ENCODE measurements at regions of chr4 and their contacts with region 1.

Region 1: GRCh38 chr4:121950212-121950679 is 1.6 kb downstream of the TRPC3 start:
- DNase-seq: peak; percentile 13 to 30
- ATAC-seq: peak; percentile 31 to 34
- H3K4me3 ChIP-seq: peak overlapping the region; percentile 53 to 58 (median 54)
- H3K27ac ChIP-seq: no peak overlapping the region
- H3K4me1 ChIP-seq: peaks cover 0 to 8% of the 10 kb centered on the region in 2 donors
- H3K27me3 ChIP-seq: peaks cover 21 to 33% (median 26%) of the 10 kb centered on the region in 3 donors
- CTCF ChIP-seq: peak in 4 of 5 experiments; percentile 33 to 64 (median 60)
- POLR2A ChIP-seq: no peak

Region 2: GRCh38 chr4:122151982-122152710 is 201.9 kb after region 1 on chr4 and contains the start of gene BLTP1:
- in situ Hi-C with region 1: no loop called
- intact Hi-C with region 1: loop called (anchors 1 kb)
- DNase-seq: peak; percentile 71 to 76
- ATAC-seq: peak; percentile 89 to 93
- H3K4me3 ChIP-seq: peak within 1 kb of the TSS; percentile 85 to 99 (median 94)
- H3K27ac ChIP-seq: peak within 1 kb of the TSS; percentile 84 to 97 (median 94)
- H3K4me1 ChIP-seq: peaks cover 21 to 24% of the 10 kb centered on the region in 2 donors
- H3K27me3 ChIP-seq: no peaks in the 10 kb centered on the region
- CTCF ChIP-seq: no peak
- POLR2A ChIP-seq: peak; percentile 32 to 40
- total RNA-seq, gene BLTP1: 37.2 to 77.1 (median 42.5) TPM

Region 3: GRCh38 chr4:122218762-122219161 is 268.5 kb after region 1 on chr4:
- in situ Hi-C with region 1: no loop called
- intact Hi-C with region 1: loop called (anchors 2 kb)
- DNase-seq: no peak
- ATAC-seq: no peak
- H3K4me3 ChIP-seq: no peak overlapping the region
- H3K27ac ChIP-seq: no peak overlapping the region
- H3K4me1 ChIP-seq: no peaks in the 10 kb centered on the region
- H3K27me3 ChIP-seq: no peaks in the 10 kb centered on the region
- CTCF ChIP-seq: peak in 1 of 5 experiments; percentile 24
- POLR2A ChIP-seq: no peak

Measured in gastrocnemius medialis (tissue), 4 donors.